Activated CD8-positive, alpha-beta T cell treated with anti-CD3 and anti-CD28 coated beads for 36 hours (primary cell): ENCODE measurements at regions of chr6 and their contacts with region 1.

Region 1: GRCh38 chr6:160455541-160456213 is 107.5 kb downstream of the SLC22A3 start:
- DNase-seq: peak; percentile 72
- ATAC-seq: peak; percentile 96
- H3K4me3 Mint-ChIP-seq: no peak overlapping the region
- H3K27ac Mint-ChIP-seq: no peak overlapping the region
- H3K4me1 Mint-ChIP-seq: peaks cover 18% of the 10 kb centered on the region
- H3K27me3 Mint-ChIP-seq: peaks cover 24% of the 10 kb centered on the region
- CTCF ChIP-seq: peak; percentile 97

Region 2: GRCh38 chr6:160137989-160138835 is 317.5 kb before region 1 on chr6:
- CTCF ChIA-PET with region 1: interaction called, 34 read pairs
- POLR2A ChIA-PET with region 1: no interaction called
- intact Hi-C with region 1: loop called (anchors 1 kb)
- DNase-seq: peak; percentile 75
- ATAC-seq: peak; percentile 81
- H3K4me3 Mint-ChIP-seq: no peak overlapping the region
- H3K27ac Mint-ChIP-seq: no peak overlapping the region
- H3K4me1 Mint-ChIP-seq: peaks cover 10% of the 10 kb centered on the region
- H3K27me3 Mint-ChIP-seq: no peaks in the 10 kb centered on the region
- CTCF ChIP-seq: peak; percentile 83

Region 3: GRCh38 chr6:160358225-160359119 is 97.2 kb before region 1 on chr6:
- CTCF ChIA-PET with region 1: no interaction called
- POLR2A ChIA-PET with region 1: no interaction called
- intact Hi-C with region 1: no loop called
- DNase-seq: no peak
- ATAC-seq: no peak
- H3K4me3 Mint-ChIP-seq: no peak overlapping the region
- H3K27ac Mint-ChIP-seq: no peak overlapping the region
- H3K4me1 Mint-ChIP-seq: no peaks in the 10 kb centered on the region
- H3K27me3 Mint-ChIP-seq: peaks cover 8% of the 10 kb centered on the region
- CTCF ChIP-seq: no peak

Region 4: GRCh38 chr6:160679402-160679769 is 223.7 kb after region 1 on chr6:
- CTCF ChIA-PET with region 1: no interaction called
- POLR2A ChIA-PET with region 1: no interaction called
- intact Hi-C with region 1: no loop called
- DNase-seq: no peak
- ATAC-seq: no peak
- H3K4me3 Mint-ChIP-seq: no peak overlapping the region
- H3K27ac Mint-ChIP-seq: no peak overlapping the region
- H3K4me1 Mint-ChIP-seq: no peaks in the 10 kb centered on the region
- H3K27me3 Mint-ChIP-seq: no peaks in the 10 kb centered on the region
- CTCF ChIP-seq: no peak